ENCODE measurements at regions of chr4 and their contacts with region 1.

Region 1: GRCh38 chr4:11805842-11806241 is 377.1 kb upstream of the HS3ST1 start:
- DNase-seq: peak; percentile 9
- H3K4me3 ChIP-seq: no peak overlapping the region
- H3K27ac ChIP-seq: no peak overlapping the region
- H3K4me1 ChIP-seq: no peaks in the 10 kb centered on the region
- H3K27me3 ChIP-seq: no peaks in the 10 kb centered on the region
- CTCF ChIP-seq: peak in 2 of 4 experiments; percentile 64 to 67
- POLR2A ChIP-seq: no peak

Region 2: GRCh38 chr4:11663114-11663513 is 142.7 kb before region 1 on chr4:
- intact Hi-C with region 1: no loop called
- DNase-seq: no peak
- H3K4me3 ChIP-seq: no peak overlapping the region
- H3K27ac ChIP-seq: no peak overlapping the region
- H3K4me1 ChIP-seq: no peaks in the 10 kb centered on the region
- H3K27me3 ChIP-seq: no peaks in the 10 kb centered on the region
- CTCF ChIP-seq: no peak
- POLR2A ChIP-seq: no peak

Region 3: DNA sequence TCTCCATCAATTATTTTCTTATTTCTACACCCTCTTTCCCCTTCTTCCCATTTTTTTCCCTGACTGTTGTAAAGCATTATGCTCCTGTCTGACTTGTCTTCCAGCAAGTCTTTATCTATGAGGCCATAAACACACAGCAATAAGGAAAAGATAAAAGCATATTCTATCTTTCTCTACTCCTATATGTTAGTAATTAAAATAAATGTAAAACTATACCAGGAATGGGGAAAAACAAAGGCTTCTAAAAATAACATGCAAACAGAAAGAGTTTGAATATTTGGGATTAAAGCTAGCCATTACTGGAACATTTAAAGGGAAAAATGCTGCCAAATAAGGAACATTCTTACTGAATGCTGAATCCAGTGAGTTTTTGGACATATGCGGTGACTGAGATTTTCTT is 94.5 kb after region 1 on chr4:
- intact Hi-C with region 1: no loop called
- DNase-seq: no peak
- H3K4me3 ChIP-seq: no peak overlapping the region
- H3K27ac ChIP-seq: no peak overlapping the region
- H3K4me1 ChIP-seq: no peaks in the 10 kb centered on the region
- H3K27me3 ChIP-seq: no peaks in the 10 kb centered on the region
- CTCF ChIP-seq: no peak
- POLR2A ChIP-seq: no peak

Region 4: GRCh38 chr4:12633053-12633651 is 827.3 kb after region 1 on chr4:
- intact Hi-C with region 1: loop called (anchors 5 kb)
- DNase-seq: peak; percentile 79
- H3K4me3 ChIP-seq: no peak overlapping the region
- H3K27ac ChIP-seq: no peak overlapping the region
- H3K4me1 ChIP-seq: no peaks in the 10 kb centered on the region
- H3K27me3 ChIP-seq: peaks cover 2% of the 10 kb centered on the region
- CTCF ChIP-seq: peak; percentile 59 to 90 (median 86)
- POLR2A ChIP-seq: no peak